ENCODE measurements at regions of chr16 and their contacts with region 1.

Region 1: GRCh38 chr16:69565671-69566239 is at the start of gene NFAT5:
- DNase-seq: peak; percentile 100
- ATAC-seq: peak; percentile 67
- H3K4me3 Mint-ChIP-seq: peak within 1 kb of the TSS; percentile 99
- H3K27ac Mint-ChIP-seq: peak within 1 kb of the TSS; percentile 99
- H3K4me1 Mint-ChIP-seq: peaks cover 60% of the 10 kb centered on the region
- H3K27me3 Mint-ChIP-seq: no peaks in the 10 kb centered on the region
- CTCF ChIP-seq: no peak
- total RNA-seq, gene NFAT5: 39.9 and 48.3 TPM in 2 replicates

Region 2: GRCh38 chr16:68085259-68086071 is 1480.3 kb before region 1 on chr16 and contains the start of gene NFATC3:
- CTCF ChIA-PET with region 1: no interaction called
- POLR2A ChIA-PET with region 1: no interaction called
- intact Hi-C with region 1: loop called (anchors 10 kb)
- DNase-seq: peak; percentile 96
- ATAC-seq: peak; percentile 78
- H3K4me3 Mint-ChIP-seq: peak within 1 kb of the TSS; percentile 98
- H3K27ac Mint-ChIP-seq: peak within 1 kb of the TSS; percentile 97
- H3K4me1 Mint-ChIP-seq: peaks cover 77% of the 10 kb centered on the region
- H3K27me3 Mint-ChIP-seq: no peaks in the 10 kb centered on the region
- CTCF ChIP-seq: no peak
- total RNA-seq, gene NFATC3: 64.8 and 72.0 TPM in 2 replicates

Region 3: DNA sequence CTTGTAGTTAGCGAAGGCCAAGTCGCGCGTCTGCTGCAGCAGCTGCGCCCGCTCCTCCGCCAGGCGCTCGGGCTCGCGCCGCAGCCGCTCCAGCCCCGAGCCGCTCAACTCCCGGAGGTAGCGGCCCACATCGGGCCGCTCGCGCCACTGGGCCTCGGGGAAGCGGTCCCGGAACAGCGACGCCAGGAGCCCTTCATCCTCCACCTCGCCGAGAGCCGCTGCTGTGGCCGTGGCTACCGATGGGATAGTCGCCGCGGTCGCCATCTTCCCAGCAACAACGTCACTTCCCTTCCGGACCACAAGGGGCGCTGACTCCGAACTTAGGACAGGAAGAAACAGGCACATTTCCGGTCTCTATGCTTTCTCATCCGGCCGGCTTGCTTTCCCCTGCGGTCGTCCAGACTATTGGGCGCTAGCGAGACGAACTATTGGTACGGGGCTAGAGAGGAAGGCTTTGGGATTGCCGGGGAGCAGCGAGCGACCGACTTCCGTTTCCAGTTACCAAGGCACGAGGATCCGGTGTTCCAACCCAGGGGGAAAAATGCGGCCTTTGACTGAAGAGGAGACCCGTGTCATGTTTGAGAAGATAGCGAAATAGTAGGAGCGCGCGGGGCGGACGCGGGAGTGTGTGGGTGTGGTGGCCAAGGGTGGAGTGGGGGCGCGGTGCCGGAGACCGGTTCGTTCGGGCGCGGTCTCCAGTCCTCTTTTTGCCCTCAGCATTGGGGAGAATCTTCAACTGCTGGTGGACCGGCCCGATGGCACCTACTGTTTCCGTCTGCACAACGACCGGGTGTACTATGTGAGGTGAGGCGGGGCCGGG is 226.3 kb before region 1 on chr16 and contains the starts of genes COG8 and NIP7:
- CTCF ChIA-PET with region 1: no interaction called
- POLR2A ChIA-PET with region 1: interaction called, 3 read pairs
- intact Hi-C with region 1: loop called (anchors 1 kb)
- DNase-seq: peak; percentile 87
- ATAC-seq: peak; percentile 91
- H3K4me3 Mint-ChIP-seq: peak within 1 kb of the TSS; percentile 100
- H3K27ac Mint-ChIP-seq: peak within 1 kb of the TSS; percentile 99
- H3K4me1 Mint-ChIP-seq: peaks cover 39% of the 10 kb centered on the region
- H3K27me3 Mint-ChIP-seq: no peaks in the 10 kb centered on the region
- CTCF ChIP-seq: no peak
- total RNA-seq, gene COG8: 40.5 and 45.4 TPM in 2 replicates
- total RNA-seq, gene NIP7: 42.4 and 44.3 TPM in 2 replicates

Region 4: GRCh38 chr16:69424053-69424934 is 141.5 kb before region 1 on chr16 and contains the start of gene CYB5B:
- CTCF ChIA-PET with region 1: no interaction called
- POLR2A ChIA-PET with region 1: interaction called, 10 read pairs
- intact Hi-C with region 1: loop called (anchors 1 kb)
- DNase-seq: peak; percentile 81
- ATAC-seq: peak; percentile 95
- H3K4me3 Mint-ChIP-seq: peak within 1 kb of the TSS; percentile 96
- H3K27ac Mint-ChIP-seq: peak within 1 kb of the TSS; percentile 91
- H3K4me1 Mint-ChIP-seq: peaks cover 24% of the 10 kb centered on the region
- H3K27me3 Mint-ChIP-seq: no peaks in the 10 kb centered on the region
- CTCF ChIP-seq: no peak
- total RNA-seq, gene CYB5B: 112 and 115 TPM in 2 replicates

Region 5: GRCh38 chr16:69465083-69465721 is 100.6 kb before region 1 on chr16:
- CTCF ChIA-PET with region 1: interaction called, 3 read pairs
- POLR2A ChIA-PET with region 1: interaction called, 34 read pairs
- intact Hi-C with region 1: loop called (anchors 1 kb)
- DNase-seq: no peak
- ATAC-seq: no peak
- H3K4me3 Mint-ChIP-seq: peak overlapping the region; percentile 1
- H3K27ac Mint-ChIP-seq: peak overlapping the region; percentile 69
- H3K4me1 Mint-ChIP-seq: peaks cover 36% of the 10 kb centered on the region
- H3K27me3 Mint-ChIP-seq: no peaks in the 10 kb centered on the region
- CTCF ChIP-seq: no peak

Region 6: DNA sequence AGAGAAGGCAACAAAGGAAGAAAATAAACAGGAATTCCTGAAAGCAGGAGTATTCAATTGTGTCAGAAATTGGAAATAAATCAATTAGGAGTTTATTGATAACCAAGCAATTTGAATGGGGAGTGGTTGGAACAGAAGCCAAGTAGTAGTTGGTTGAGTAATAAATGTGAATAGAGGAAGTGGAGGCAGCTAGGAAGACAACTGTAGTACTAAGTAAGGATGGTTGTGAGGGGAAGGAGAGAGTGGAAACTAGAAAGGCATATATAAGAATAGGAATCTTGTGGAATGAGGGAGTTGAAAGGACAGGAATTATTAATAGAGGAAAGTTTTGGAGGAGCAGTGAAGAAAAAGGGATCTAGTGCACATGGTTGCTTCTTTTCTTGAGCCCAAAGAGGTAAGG is 34.4 kb after region 1 on chr16:
- CTCF ChIA-PET with region 1: no interaction called
- POLR2A ChIA-PET with region 1: no interaction called
- intact Hi-C with region 1: loop called (anchors 5 kb)
- DNase-seq: no peak
- ATAC-seq: no peak
- H3K4me3 Mint-ChIP-seq: no peak overlapping the region
- H3K27ac Mint-ChIP-seq: no peak overlapping the region
- H3K4me1 Mint-ChIP-seq: peaks cover 25% of the 10 kb centered on the region
- H3K27me3 Mint-ChIP-seq: no peaks in the 10 kb centered on the region
- CTCF ChIP-seq: no peak

Region 7: DNA sequence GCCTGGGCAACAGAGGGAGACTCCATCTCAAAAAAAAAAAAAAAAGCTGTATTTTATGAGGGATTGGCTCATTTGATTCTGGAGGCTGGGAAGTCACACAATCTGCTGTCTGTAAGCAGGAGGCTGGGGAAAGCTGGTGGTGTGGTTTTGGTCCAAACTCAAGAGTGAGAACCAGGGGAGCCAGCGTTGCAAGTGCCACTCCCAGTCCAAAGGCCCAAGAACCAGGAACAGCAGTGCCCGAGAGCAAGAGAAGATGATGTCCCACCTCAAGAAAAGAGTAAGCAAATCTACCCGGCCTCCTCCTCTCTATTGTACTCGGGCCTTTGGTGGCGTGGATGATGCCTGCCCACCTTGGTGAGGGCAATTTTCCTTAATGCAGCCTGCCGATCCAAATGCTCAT is 166.3 kb after region 1 on chr16:
- CTCF ChIA-PET with region 1: no interaction called
- POLR2A ChIA-PET with region 1: no interaction called
- intact Hi-C with region 1: no loop called
- DNase-seq: no peak
- ATAC-seq: no peak
- H3K4me3 Mint-ChIP-seq: no peak overlapping the region
- H3K27ac Mint-ChIP-seq: no peak overlapping the region
- H3K4me1 Mint-ChIP-seq: peaks cover 3% of the 10 kb centered on the region
- H3K27me3 Mint-ChIP-seq: no peaks in the 10 kb centered on the region
- CTCF ChIP-seq: no peak

Region 8: GRCh38 chr16:70289229-70290098 is 723.7 kb after region 1 on chr16 and contains the start of gene AARS1:
- CTCF ChIA-PET with region 1: no interaction called
- POLR2A ChIA-PET with region 1: no interaction called
- intact Hi-C with region 1: loop called (anchors 5 kb)
- DNase-seq: peak; percentile 84
- ATAC-seq: peak; percentile 96
- H3K4me3 Mint-ChIP-seq: peak within 1 kb of the TSS; percentile 98
- H3K27ac Mint-ChIP-seq: peak within 1 kb of the TSS; percentile 96
- H3K4me1 Mint-ChIP-seq: peaks cover 16% of the 10 kb centered on the region
- H3K27me3 Mint-ChIP-seq: no peaks in the 10 kb centered on the region
- CTCF ChIP-seq: no peak
- total RNA-seq, gene AARS1: 152 and 154 TPM in 2 replicates

Measured in activated B cell treated with CpG ODN at 0.5 μM for 24 hours (primary cell).